K562 (cell line): ENCODE measurements at regions of chr19 and their contacts with region 1.

Region 1: GRCh38 chr19:46076951-46077816 is 36.4 kb upstream of the IGFL4 start:
- DNase-seq: peak; percentile 87 to 90 (median 88)
- ATAC-seq: peak; percentile 100
- H3K4me3 ChIP-seq: peak overlapping the region; percentile 22
- H3K27ac ChIP-seq: no peak overlapping the region
- H3K4me1 ChIP-seq: peaks cover 0 to 8% of the 10 kb centered on the region in 2 experiments; a peak in 2 of 5 replicates
- H3K27me3 ChIP-seq: peaks cover 2 to 13% of the 10 kb centered on the region in 2 experiments; a peak in 2 of 5 replicates
- CTCF ChIP-seq: peak; percentile 98 to 100 (median 100)
- EP300 ChIP-seq: no peak
- POLR2A ChIP-seq: no peak
- RAD21 ChIP-seq: peak; percentile 95 to 96

Region 2: GRCh38 chr19:45817010-45817724 is 260.0 kb before region 1 on chr19:
- CTCF ChIA-PET with region 1: interaction called, 16 read pairs
- POLR2A ChIA-PET with region 1: no interaction called
- in situ Hi-C with region 1: no loop called
- intact Hi-C with region 1: loop called (anchors 10 kb)
- DNase-seq: peak; percentile 96 to 98 (median 98)
- ATAC-seq: peak; percentile 98
- H3K4me3 ChIP-seq: no peak overlapping the region
- H3K27ac ChIP-seq: no peak overlapping the region
- H3K4me1 ChIP-seq: peaks cover 0 to 41% of the 10 kb centered on the region in 2 experiments; a peak in 3 of 5 replicates
- H3K27me3 ChIP-seq: no peaks in the 10 kb centered on the region
- CTCF ChIP-seq: peak; percentile 99 to 100 (median 99)
- EP300 ChIP-seq: peak; percentile 35; the same call in 1 of the 2 replicates
- POLR2A ChIP-seq: no peak
- RAD21 ChIP-seq: peak; percentile 68 to 84

Region 3: GRCh38 chr19:46009530-46010510 is 67.4 kb before region 1 on chr19:
- CTCF ChIA-PET with region 1: interaction called, 15 read pairs
- POLR2A ChIA-PET with region 1: no interaction called
- in situ Hi-C with region 1: no loop called
- intact Hi-C with region 1: no loop called
- DNase-seq: peak; percentile 72 to 83 (median 80)
- ATAC-seq: peak; percentile 97
- H3K4me3 ChIP-seq: no peak overlapping the region
- H3K27ac ChIP-seq: no peak overlapping the region
- H3K4me1 ChIP-seq: peaks cover 3 to 12% of the 10 kb centered on the region in 2 experiments; a peak in 2 of 5 replicates
- H3K27me3 ChIP-seq: no peaks in the 10 kb centered on the region
- CTCF ChIP-seq: peak; percentile 79 to 90 (median 82)
- EP300 ChIP-seq: no peak
- POLR2A ChIP-seq: no peak
- RAD21 ChIP-seq: peak in 1 of 2 experiments; percentile 54; a peak in 2 of 4 replicates

Region 4: DNA sequence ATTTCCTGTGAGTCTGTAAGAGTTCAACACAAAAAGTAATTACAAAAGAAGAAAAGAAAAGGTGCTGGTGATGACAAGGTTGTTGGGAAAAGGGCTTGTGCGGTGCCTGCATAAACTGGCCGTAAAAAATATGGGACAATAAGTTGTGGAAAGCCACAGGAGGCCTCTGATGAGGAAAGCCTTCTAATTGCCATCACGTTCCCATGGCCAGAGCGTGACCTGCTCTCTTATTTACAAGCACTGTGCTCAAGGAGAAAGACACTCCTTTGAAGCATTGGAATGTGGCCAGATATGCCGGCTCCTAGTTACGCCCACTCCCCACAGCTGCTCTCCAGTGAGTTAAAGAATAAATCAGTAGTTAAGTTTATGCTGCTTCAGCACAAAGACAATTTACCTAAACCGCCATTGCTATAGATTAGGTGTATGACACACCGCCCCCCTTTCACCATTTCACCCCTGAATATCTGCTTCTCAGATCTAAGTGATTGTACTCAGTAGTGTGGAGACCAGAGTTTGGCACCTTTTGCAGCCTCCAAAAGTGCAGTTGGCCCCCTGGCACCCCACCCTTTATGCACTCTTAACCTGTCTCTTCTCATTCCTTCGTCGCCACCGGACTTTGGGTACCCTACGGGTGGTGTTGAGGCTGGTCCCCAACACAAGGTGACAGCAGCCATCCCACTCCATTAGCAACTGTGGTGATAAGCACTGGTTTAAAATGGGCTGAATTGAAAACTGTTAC is 46.2 kb before region 1 on chr19:
- CTCF ChIA-PET with region 1: interaction called, 79 read pairs
- POLR2A ChIA-PET with region 1: interaction called, 3 read pairs
- in situ Hi-C with region 1: no loop called
- intact Hi-C with region 1: loop called (anchors 1 kb)
- DNase-seq: no peak
- ATAC-seq: no peak
- H3K4me3 ChIP-seq: no peak overlapping the region
- H3K27ac ChIP-seq: no peak overlapping the region
- H3K4me1 ChIP-seq: no peaks in the 10 kb centered on the region
- H3K27me3 ChIP-seq: peaks cover 2 to 21% of the 10 kb centered on the region in 2 experiments; a peak in 2 of 5 replicates
- CTCF ChIP-seq: no peak
- EP300 ChIP-seq: no peak
- POLR2A ChIP-seq: no peak
- RAD21 ChIP-seq: no peak

Region 5: GRCh38 chr19:46060012-46060411 is 17.2 kb before region 1 on chr19:
- CTCF ChIA-PET with region 1: no interaction called
- POLR2A ChIA-PET with region 1: no interaction called
- in situ Hi-C with region 1: no loop called
- intact Hi-C with region 1: no loop called
- DNase-seq: no peak
- ATAC-seq: no peak
- H3K4me3 ChIP-seq: no peak overlapping the region
- H3K27ac ChIP-seq: no peak overlapping the region
- H3K4me1 ChIP-seq: no peaks in the 10 kb centered on the region
- H3K27me3 ChIP-seq: 0 out of 5 replicates have a peak, but pooled peaks cover 0 to 4% of the 10 kb centered on the region in 2 experiments
- CTCF ChIP-seq: no peak
- EP300 ChIP-seq: no peak
- POLR2A ChIP-seq: no peak
- RAD21 ChIP-seq: no peak

Region 6: GRCh38 chr19:46189971-46190888 is 113.0 kb after region 1 on chr19:
- CTCF ChIA-PET with region 1: interaction called, 4 read pairs
- POLR2A ChIA-PET with region 1: no interaction called
- in situ Hi-C with region 1: no loop called
- intact Hi-C with region 1: loop called (anchors 2 kb)
- DNase-seq: no peak
- ATAC-seq: no peak
- H3K4me3 ChIP-seq: no peak overlapping the region
- H3K27ac ChIP-seq: no peak overlapping the region
- H3K4me1 ChIP-seq: peaks cover 6 to 7% of the 10 kb centered on the region in 2 experiments; a peak in 4 of 5 replicates
- H3K27me3 ChIP-seq: peaks cover 5 to 37% of the 10 kb centered on the region in 2 experiments; a peak in 4 of 5 replicates
- CTCF ChIP-seq: no peak
- EP300 ChIP-seq: no peak
- POLR2A ChIP-seq: no peak
- RAD21 ChIP-seq: no peak

Region 7: DNA sequence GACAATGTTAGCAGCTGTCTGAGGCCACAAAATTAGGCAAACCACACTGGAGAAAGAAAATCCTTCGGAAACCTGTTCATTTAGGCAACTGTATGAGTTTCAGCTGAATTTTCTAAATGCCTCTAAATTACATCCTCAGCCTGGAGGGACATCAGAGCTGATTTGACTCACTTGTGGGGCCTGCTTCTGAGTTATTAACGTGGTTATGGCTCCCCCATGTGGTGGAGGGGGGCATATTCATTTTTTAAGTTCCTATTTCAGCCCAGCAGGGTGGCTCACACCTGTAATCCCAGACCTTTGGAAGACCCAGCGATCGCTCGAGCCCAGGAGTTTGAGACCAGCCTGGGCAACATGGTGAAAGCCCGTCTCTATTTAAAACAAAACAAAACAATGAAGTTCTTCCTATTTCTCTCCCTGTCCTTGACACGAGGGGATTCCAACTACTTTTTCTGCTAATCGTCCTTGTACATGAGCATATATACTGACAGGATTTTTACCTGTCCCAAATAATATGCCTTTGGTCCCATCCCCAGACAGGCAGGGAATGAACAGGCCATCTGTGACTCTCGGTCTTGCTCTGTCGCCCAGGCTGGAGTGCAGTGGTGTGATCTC is 188.1 kb after region 1 on chr19:
- CTCF ChIA-PET with region 1: interaction called, 115 read pairs
- POLR2A ChIA-PET with region 1: no interaction called
- in situ Hi-C with region 1: loop called (anchors 5 kb)
- intact Hi-C with region 1: loop called (anchors 1 kb)
- DNase-seq: peak; percentile 71 to 83 (median 73)
- ATAC-seq: peak; percentile 96
- H3K4me3 ChIP-seq: no peak overlapping the region
- H3K27ac ChIP-seq: no peak overlapping the region
- H3K4me1 ChIP-seq: peaks cover 0 to 2% of the 10 kb centered on the region in 2 experiments; a peak in 1 of 5 replicates
- H3K27me3 ChIP-seq: peaks cover 5 to 18% of the 10 kb centered on the region in 2 experiments
- CTCF ChIP-seq: peak; percentile 86 to 96 (median 96)
- EP300 ChIP-seq: no peak
- POLR2A ChIP-seq: no peak
- RAD21 ChIP-seq: peak; percentile 89 to 91